ENCODE measurements at regions of chr10 and their contacts with region 1.

Region 1: DNA sequence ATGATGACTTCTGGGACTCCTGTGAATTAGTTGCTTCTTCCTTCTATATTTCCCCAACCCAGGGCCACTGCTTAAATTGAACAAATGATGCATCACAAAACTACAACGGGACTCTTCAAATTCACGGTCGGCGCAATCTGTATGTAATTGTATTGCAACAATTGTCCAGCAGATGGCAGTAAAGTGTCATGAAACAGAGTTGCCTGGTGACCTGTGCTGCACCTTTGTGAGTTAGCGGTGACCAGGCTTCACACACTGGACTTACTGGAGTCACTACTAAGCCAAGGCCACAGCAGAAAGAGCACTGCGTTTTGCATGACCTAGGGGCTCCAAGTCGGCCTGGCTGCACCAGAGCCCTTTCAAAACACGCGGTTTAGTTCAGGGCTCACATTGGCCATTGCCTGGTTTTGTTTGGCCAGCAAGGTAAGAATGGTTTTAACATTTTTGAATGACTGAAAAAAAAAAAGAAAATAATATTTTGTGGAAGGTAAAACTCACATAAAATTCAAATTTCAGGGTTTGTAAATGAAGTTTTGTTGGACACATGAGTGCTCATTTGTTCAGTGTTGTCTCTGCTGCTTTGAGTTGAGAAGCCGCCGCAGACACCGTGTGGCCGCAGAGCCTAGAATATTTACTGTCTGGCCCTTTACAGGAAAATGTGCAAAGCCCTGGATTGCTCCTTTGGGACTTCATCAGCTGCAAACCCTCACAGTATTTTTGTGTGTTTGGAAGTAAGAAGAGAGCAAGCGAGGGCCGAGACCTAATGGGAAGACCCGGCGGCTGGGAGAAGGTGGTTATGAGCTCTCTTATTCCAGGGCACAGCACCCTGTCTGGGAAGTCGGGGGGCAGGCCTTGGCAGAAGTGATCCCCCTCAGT is 23.2 kb upstream of the ZNF32 start:
- DNase-seq: peak in 2 of 10 donors; percentile 27 to 69

Region 2: GRCh38 chr10:43816351-43817321 is 144.7 kb after region 1 on chr10:
- intact Hi-C with region 1: no loop called
- DNase-seq: no peak

Region 3: GRCh38 chr10:43892062-43892770 is 220.3 kb after region 1 on chr10:
- intact Hi-C with region 1: no loop called
- DNase-seq: no peak

Region 4: GRCh38 chr10:44310762-44311562 is 639.1 kb after region 1 on chr10:
- intact Hi-C with region 1: loop called (anchors 5 kb)
- DNase-seq: peak; percentile 73 to 98 (median 86)

Region 5: GRCh38 chr10:44864637-44865288 is 1192.9 kb after region 1 on chr10:
- intact Hi-C with region 1: loop called (anchors 2 kb)
- DNase-seq: peak; percentile 86 to 99 (median 94)

Measured in posterior cingulate gyrus (tissue), 11 donors.